Spleen (tissue), 13 donors: ENCODE measurements at regions of chr7 and their contacts with region 1.

Region 1: GRCh38 chr7:32212321-32212720 is 142.1 kb upstream of the PDE1C start:
- DNase-seq: no peak
- H3K4me3 ChIP-seq: no peak overlapping the region
- H3K27ac ChIP-seq: no peak overlapping the region
- H3K4me1 ChIP-seq: no peaks in the 10 kb centered on the region
- H3K27me3 ChIP-seq: peaks cover 0 to 6% (median 0%) of the 10 kb centered on the region in 7 donors
- CTCF ChIP-seq: no peak
- POLR2A ChIP-seq: no peak

Region 2: GRCh38 chr7:32357535-32358277 is 145.4 kb after region 1 on chr7:
- intact Hi-C with region 1: loop called (anchors 5 kb)
- DNase-seq: no peak
- H3K4me3 ChIP-seq: no peak overlapping the region
- H3K27ac ChIP-seq: no peak overlapping the region
- H3K4me1 ChIP-seq: no peaks in the 10 kb centered on the region
- H3K27me3 ChIP-seq: peaks cover 0 to 10% (median 0%) of the 10 kb centered on the region in 7 donors
- CTCF ChIP-seq: no peak
- POLR2A ChIP-seq: no peak

Region 3: GRCh38 chr7:32479574-32480200 is 267.4 kb after region 1 on chr7:
- intact Hi-C with region 1: loop called (anchors 5 kb)
- DNase-seq: no peak
- H3K4me3 ChIP-seq: no peak overlapping the region
- H3K27ac ChIP-seq: no peak overlapping the region
- H3K4me1 ChIP-seq: no peaks in the 10 kb centered on the region
- H3K27me3 ChIP-seq: no peaks in the 10 kb centered on the region
- CTCF ChIP-seq: peak in 7 of 11 experiments; percentile 11 to 50 (median 36)
- POLR2A ChIP-seq: no peak